Activated B cell treated with CpG ODN at 0.5 μM for 24 hours (primary cell): ENCODE measurements at regions of chr12 and their contacts with region 1.

Region 1: GRCh38 chr12:113098446-113098896 is 37.1 kb downstream of the RASAL1 start:
- DNase-seq: peak; percentile 71
- ATAC-seq: peak; percentile 90
- H3K4me3 Mint-ChIP-seq: no peak overlapping the region
- H3K27ac Mint-ChIP-seq: peak overlapping the region; percentile 35
- H3K4me1 Mint-ChIP-seq: peaks cover 18% of the 10 kb centered on the region
- H3K27me3 Mint-ChIP-seq: no peaks in the 10 kb centered on the region
- CTCF ChIP-seq: no peak

Region 2: GRCh38 chr12:112900299-112901145 is 197.9 kb before region 1 on chr12:
- CTCF ChIA-PET with region 1: no interaction called
- POLR2A ChIA-PET with region 1: no interaction called
- intact Hi-C with region 1: loop called (anchors 2 kb)
- DNase-seq: no peak
- ATAC-seq: peak; percentile 45
- H3K4me3 Mint-ChIP-seq: no peak overlapping the region
- H3K27ac Mint-ChIP-seq: no peak overlapping the region
- H3K4me1 Mint-ChIP-seq: peaks cover 42% of the 10 kb centered on the region
- H3K27me3 Mint-ChIP-seq: peaks cover 2% of the 10 kb centered on the region
- CTCF ChIP-seq: peak; percentile 73

Region 3: DNA sequence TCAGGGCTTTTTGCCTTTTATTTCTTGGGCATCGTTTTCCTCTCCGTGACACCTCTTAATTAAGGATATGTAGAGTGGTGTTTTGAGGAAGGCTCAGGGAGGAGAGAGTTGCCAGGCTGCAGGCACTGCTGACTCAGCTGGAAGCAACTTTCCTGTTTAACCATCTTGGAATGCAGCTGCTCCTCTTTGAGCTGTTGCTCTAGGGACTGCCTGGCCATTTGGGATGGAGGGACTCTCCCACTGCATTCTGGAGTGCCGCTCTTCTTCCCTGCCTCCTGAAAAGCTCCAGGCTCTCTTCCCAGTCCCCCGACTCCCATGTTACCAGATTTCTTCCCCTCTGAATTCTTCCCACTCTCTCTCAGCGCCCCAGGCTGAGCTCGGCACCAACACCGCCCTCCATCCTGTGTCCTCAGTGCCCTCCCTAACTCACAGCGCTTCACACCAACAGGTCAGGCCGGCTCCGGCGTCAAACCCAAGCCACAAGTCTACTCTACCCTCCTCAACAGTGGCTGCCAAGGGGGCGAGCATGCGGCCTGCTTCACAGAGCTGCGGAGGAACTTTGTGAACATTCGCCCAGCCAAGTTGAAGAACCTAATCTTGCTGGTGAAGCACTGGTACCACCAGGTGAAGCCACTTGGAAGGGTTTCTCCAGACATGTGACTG is 154.3 kb before region 1 on chr12:
- CTCF ChIA-PET with region 1: no interaction called
- POLR2A ChIA-PET with region 1: no interaction called
- intact Hi-C with region 1: no loop called
- DNase-seq: no peak
- ATAC-seq: no peak
- H3K4me3 Mint-ChIP-seq: no peak overlapping the region
- H3K27ac Mint-ChIP-seq: no peak overlapping the region
- H3K4me1 Mint-ChIP-seq: peaks cover 14% of the 10 kb centered on the region
- H3K27me3 Mint-ChIP-seq: no peaks in the 10 kb centered on the region
- CTCF ChIP-seq: no peak

Region 4: GRCh38 chr12:113048716-113049127 is 49.7 kb before region 1 on chr12:
- CTCF ChIA-PET with region 1: interaction called, 85 read pairs
- POLR2A ChIA-PET with region 1: interaction called, 21 read pairs
- intact Hi-C with region 1: loop called (anchors 1 kb)
- DNase-seq: no peak
- ATAC-seq: peak; percentile 43
- H3K4me3 Mint-ChIP-seq: no peak overlapping the region
- H3K27ac Mint-ChIP-seq: peak overlapping the region; percentile 75
- H3K4me1 Mint-ChIP-seq: peaks cover 50% of the 10 kb centered on the region
- H3K27me3 Mint-ChIP-seq: no peaks in the 10 kb centered on the region
- CTCF ChIP-seq: no peak

Region 5: GRCh38 chr12:113086249-113087164 is 12.0 kb before region 1 on chr12:
- CTCF ChIA-PET with region 1: interaction called, 12 read pairs
- POLR2A ChIA-PET with region 1: no interaction called
- intact Hi-C with region 1: no loop called
- DNase-seq: no peak
- ATAC-seq: peak; percentile 10
- H3K4me3 Mint-ChIP-seq: peak overlapping the region; percentile 71
- H3K27ac Mint-ChIP-seq: peak overlapping the region; percentile 81
- H3K4me1 Mint-ChIP-seq: peaks cover 96% of the 10 kb centered on the region
- H3K27me3 Mint-ChIP-seq: no peaks in the 10 kb centered on the region
- CTCF ChIP-seq: no peak

Region 6: DNA sequence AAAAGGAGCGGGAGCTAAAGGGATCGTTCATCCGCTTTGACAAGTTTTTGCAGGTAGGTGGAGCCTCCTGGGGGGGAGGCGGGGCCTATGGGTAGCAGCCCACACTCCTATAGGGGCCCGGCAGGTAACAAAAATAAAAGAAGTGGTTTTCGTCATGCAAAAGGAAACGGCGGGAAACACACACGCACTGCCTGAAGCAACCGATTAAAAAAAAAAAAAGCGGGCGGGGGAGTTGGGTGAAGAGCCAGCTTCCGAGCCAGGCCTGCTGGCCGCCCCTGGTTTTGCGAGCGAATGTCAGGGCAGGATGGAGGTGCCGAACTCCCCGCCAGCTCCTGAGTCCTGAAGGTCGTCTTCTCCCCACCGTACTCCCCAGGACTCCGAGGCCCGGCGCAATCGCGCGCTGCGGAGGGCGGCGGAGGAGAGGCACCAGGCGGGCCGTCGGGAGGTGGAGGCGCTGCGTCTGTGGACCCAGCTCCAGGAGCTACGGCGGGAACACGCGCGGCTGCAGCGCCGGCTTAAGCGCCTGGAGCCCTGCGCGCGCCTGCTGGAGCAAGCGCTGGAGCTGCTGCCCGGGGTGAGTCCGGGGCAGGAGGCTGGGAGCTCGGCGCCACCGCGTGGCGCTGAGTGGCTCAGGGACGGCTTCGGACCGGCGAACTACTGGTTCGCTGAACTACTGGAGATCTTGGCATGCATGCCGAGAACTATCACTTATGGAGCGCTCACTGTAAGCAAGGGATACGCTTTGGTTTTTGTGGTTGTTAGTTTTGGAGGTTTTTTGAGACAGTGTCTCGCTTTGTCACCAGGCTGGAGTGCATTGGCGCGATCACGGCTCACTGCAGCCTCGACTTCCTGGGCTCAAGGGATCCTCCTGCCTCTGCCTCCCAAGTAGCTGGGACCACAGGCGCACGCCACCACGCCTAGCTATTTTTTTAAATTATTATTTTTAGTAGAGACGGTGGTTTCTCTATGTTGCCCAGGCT is 54.7 kb after region 1 on chr12:
- CTCF ChIA-PET with region 1: interaction called, 7 read pairs
- POLR2A ChIA-PET with region 1: interaction called, 3 read pairs
- intact Hi-C with region 1: loop called (anchors 1 kb)
- DNase-seq: peak; percentile 45
- ATAC-seq: peak; percentile 66
- H3K4me3 Mint-ChIP-seq: peak overlapping the region; percentile 80
- H3K27ac Mint-ChIP-seq: no peak overlapping the region
- H3K4me1 Mint-ChIP-seq: peaks cover 24% of the 10 kb centered on the region
- H3K27me3 Mint-ChIP-seq: peaks cover 8% of the 10 kb centered on the region
- CTCF ChIP-seq: no peak

Region 7: GRCh38 chr12:113912760-113913329 is 814.4 kb after region 1 on chr12:
- CTCF ChIA-PET with region 1: no interaction called
- POLR2A ChIA-PET with region 1: interaction called, 10 read pairs
- intact Hi-C with region 1: no loop called
- DNase-seq: peak; percentile 32
- ATAC-seq: peak; percentile 57
- H3K4me3 Mint-ChIP-seq: no peak overlapping the region
- H3K27ac Mint-ChIP-seq: no peak overlapping the region
- H3K4me1 Mint-ChIP-seq: no peaks in the 10 kb centered on the region
- H3K27me3 Mint-ChIP-seq: no peaks in the 10 kb centered on the region
- CTCF ChIP-seq: peak; percentile 15